Naive thymus-derived CD8-positive, alpha-beta T cell (primary cell): ENCODE measurements at regions of chr9 and their contacts with region 1.

Region 1: DNA sequence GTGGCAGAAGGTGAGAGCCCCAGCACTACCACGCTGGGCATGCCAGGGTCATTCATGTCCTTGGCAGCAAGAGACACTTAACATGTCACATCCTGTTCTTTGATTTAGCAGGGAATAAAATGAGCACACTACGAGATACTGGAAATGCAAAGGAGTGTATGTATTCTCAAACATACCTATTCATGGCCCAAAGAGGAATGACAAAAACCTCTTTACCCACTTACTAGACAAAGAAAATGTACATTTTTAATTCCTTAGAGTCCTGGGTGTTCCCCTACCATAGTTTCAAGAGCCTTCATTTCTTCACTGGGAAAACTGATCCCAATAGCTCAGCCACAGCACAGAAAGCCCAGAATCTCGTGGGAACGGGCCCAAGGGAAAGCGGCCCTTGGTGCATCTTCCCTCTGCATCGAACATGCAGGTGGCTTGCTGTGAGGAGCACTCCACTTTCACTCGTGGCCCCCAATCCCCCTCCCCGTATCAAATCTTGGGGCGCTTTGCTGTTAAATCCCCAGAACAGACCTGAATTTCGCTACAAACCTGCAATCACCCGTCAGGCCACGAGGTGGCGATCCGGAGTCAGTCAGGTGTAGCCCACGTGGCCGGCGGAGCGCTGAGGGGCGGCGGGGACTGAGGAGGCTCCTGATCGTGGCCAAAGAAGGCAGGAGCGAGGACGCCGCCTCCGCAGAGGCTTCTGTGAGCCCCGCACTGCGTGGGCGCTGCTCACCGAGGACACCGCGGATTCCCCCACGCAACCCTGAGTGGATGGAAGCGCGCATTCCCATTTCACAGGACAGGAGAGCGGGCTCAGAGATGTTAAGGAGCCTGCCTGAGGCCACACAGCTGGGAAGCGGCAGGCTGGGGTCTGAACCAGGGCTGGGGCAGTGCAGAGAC is 91.4 kb downstream of the LMX1B start:
- DNase-seq: peak; percentile 71 to 91 (median 84)
- ATAC-seq: peak; percentile 74 to 86
- H3K4me3 Mint-ChIP-seq: peak overlapping the region; percentile 25 to 89 (median 63)
- H3K27ac Mint-ChIP-seq: peak overlapping the region in 6 of 10 donors; percentile 4 to 91 (median 44)
- H3K4me1 Mint-ChIP-seq: peaks cover 12 to 22% (median 21%) of the 10 kb centered on the region in 4 donors
- H3K27me3 Mint-ChIP-seq: peaks cover 7 to 38% (median 26%) of the 10 kb centered on the region in 5 donors

Region 2: DNA sequence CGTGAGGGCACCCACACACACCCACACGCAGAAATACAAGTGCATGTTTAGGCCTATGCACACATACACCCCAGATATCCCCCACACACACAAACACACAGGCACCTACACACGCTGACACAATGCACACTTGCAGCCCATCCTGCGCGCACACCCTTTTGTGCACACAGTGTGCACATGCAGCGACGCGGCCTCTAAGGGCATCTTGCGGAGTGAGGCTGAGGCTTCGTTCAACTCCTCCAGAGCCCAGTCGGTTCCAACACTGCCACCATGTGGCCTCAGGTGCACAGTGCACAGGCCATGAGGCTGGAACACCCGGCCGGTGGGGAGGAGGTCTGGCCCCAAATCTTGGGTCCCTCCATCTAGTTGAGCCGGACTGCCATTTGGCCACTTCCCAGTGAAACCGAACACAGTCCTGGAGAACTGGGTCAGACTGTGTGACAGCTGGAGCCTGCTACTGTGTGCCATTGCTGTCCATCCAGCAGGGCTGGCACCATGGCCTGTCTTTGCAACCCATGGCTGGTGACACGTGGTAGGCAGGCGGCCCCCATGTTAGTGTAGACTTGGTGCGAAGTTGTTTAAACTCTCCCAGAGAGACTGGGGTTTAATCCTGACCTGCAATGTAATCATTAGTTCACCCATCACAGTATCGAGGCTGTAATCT is 476.2 kb before region 1 on chr9:
- POLR2A ChIA-PET with region 1: no interaction called
- DNase-seq: peak; percentile 29 to 82 (median 58)
- ATAC-seq: peak; percentile 92 to 94
- H3K4me3 Mint-ChIP-seq: no peak overlapping the region
- H3K27ac Mint-ChIP-seq: no peak overlapping the region
- H3K4me1 Mint-ChIP-seq: peaks cover 0 to 7% (median 3%) of the 10 kb centered on the region in 4 donors
- H3K27me3 Mint-ChIP-seq: peaks cover 14 to 67% (median 40%) of the 10 kb centered on the region in 5 donors

Region 3: GRCh38 chr9:126690431-126691350 is 14.4 kb before region 1 on chr9:
- POLR2A ChIA-PET with region 1: no interaction called
- DNase-seq: peak; percentile 14 to 74 (median 44)
- ATAC-seq: peak; percentile 74 to 76
- H3K4me3 Mint-ChIP-seq: no peak overlapping the region
- H3K27ac Mint-ChIP-seq: no peak overlapping the region
- H3K4me1 Mint-ChIP-seq: peaks cover 0 to 6% (median 3%) of the 10 kb centered on the region in 4 donors
- H3K27me3 Mint-ChIP-seq: peaks cover 11 to 76% (median 34%) of the 10 kb centered on the region in 5 donors

Region 4: DNA sequence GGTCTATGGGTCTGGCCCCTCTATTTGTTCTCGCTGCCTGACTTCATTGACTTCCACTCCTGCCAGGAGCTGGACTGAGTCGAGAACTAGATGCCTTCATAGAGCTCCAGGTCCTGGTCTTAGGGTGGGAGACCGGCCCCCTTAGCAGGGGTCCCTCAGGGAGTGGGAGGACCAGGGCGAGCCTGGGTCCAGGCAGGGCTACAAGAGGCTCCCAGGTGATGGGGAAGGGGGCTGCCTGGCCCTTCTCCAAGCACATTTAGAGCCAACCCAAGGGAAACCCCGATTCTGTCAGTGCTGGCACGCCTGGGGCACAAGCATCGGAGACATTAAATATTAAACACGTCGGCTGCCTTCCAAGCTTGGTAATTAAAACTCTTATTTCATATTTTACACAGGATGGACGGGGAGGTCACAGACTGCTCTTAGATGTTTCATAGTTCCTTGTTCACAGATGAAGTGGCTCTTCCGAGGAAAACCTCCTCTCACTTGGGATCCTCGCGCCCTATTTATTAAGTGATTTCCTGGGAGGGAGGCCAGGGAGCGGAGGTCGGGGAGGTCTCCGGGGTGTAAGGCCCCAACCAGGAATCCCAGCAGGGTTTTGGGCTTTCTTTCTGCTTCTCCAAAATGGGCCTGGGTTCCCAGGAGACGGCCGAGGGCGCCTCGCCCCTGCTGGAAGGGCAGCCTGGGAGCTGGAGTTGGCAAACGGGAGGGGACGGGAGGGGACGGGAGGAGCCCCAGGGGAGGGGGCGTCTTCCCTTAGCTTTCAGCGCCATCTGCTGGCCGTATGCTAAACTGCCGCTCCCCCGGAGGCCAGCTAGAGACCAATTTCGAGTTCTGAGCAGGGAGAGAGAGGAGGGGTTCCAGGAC is 76.3 kb after region 1 on chr9:
- POLR2A ChIA-PET with region 1: interaction called, 33 read pairs
- DNase-seq: peak; percentile 67 to 90 (median 81)
- ATAC-seq: peak; percentile 92 to 97
- H3K4me3 Mint-ChIP-seq: no peak overlapping the region
- H3K27ac Mint-ChIP-seq: peak overlapping the region in 1 of 10 donors; percentile 21
- H3K4me1 Mint-ChIP-seq: no peaks in the 10 kb centered on the region
- H3K27me3 Mint-ChIP-seq: peaks cover 6 to 34% (median 19%) of the 10 kb centered on the region in 5 donors

Region 5: GRCh38 chr9:126791406-126792151 is 86.5 kb after region 1 on chr9:
- POLR2A ChIA-PET with region 1: no interaction called
- DNase-seq: no peak
- ATAC-seq: no peak
- H3K4me3 Mint-ChIP-seq: no peak overlapping the region
- H3K27ac Mint-ChIP-seq: peak overlapping the region in 1 of 10 donors; percentile 1
- H3K4me1 Mint-ChIP-seq: no peaks in the 10 kb centered on the region
- H3K27me3 Mint-ChIP-seq: peaks cover 27 to 49% (median 39%) of the 10 kb centered on the region in 5 donors